Gastrocnemius medialis (tissue), 4 donors: ENCODE measurements at regions of chr3 and their contacts with region 1.

Region 1: DNA sequence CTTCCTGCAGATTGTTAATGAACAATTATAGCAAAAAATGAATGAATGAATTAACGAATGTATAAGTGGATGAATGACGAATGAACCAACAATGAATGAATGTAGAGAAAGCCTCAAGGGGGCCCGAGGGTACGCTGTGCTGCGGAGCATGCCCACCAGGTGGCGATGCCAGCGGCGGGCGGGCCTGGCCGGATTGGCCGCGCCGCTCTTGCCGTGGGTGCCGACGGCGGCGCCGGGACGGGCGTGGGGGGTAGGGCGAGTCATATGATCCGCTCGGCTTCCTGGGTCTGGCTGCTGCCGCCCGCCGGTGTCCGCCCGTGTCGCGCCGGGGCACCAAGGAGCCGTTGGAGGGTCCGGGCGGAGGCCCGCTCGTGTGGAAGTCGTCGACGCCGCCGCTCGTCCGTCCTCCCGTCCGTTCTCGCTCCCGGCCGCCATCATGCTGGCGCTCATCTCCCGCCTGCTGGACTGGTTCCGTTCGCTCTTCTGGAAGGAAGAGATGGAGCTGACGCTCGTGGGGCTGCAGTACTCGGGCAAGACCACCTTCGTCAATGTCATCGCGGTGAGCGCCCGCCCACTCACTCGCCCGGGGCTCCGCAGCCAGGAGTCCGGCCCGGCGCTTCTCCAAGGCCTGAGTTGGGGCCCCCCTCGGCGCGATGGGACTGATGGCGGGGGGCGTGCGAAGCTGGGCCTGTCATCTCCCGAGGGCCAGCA is at the start of gene ARL8B:
- DNase-seq: peak; percentile 82 to 89
- ATAC-seq: peak; percentile 70 to 75
- H3K4me3 ChIP-seq: peak within 1 kb of the TSS; percentile 90 to 100 (median 98)
- H3K27ac ChIP-seq: peak within 1 kb of the TSS; percentile 96 to 100 (median 98)
- H3K4me1 ChIP-seq: peaks cover 34 to 40% of the 10 kb centered on the region in 2 donors
- H3K27me3 ChIP-seq: no peaks in the 10 kb centered on the region
- CTCF ChIP-seq: peak; percentile 89 to 98 (median 98)
- POLR2A ChIP-seq: peak; percentile 91 to 96
- total RNA-seq, gene ARL8B: 69.3 to 198 (median 95.0) TPM

Region 2: DNA sequence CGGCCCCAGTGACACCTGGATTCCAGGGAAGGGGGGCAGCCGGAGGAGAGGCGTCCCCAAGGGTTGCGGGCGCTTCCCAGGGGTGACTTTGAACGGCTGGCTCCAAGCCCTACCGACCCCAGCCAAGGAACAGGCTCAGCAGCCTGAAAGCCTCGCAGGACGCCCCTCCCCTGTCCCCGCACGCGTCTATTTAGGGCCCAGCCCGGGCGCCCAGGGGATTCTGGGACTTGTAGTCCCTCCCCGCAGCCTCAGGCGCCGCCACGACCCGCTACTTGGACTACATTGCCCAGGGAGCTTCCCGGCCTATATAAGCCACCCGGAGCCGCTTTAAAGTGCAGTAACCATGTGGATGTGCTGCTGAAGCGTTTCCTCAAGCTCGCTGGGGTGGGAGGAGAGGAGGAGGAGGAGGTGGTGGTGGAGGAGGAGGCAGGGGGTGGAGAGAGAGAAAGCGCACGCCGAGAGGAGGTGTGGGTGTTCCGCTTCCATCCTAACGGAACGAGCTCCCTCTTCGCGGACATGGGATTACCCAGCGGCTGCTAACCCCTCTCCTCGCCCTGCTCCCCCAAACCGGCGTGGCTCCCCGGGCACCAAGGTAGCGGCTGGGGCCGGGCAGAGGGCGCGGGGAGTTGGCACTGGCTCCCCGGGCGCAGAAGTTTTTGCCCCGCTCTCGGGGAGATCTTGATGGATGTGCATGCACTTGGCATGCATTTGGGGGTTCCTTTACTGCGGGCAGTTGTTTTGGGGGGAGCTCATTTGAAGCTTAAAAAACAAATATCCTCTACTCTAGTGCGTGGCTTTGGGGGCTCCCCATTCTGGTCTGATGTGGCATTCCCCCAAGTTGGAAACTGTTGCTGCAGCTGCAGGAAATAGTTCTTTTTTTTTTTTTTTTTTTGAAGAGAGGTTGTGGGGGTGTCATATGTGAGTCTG is 628.9 kb before region 1 on chr3 and contains the start of gene ITPR1:
- in situ Hi-C with region 1: no loop called
- intact Hi-C with region 1: loop called (anchors 10 kb)
- DNase-seq: peak; percentile 96 to 97
- ATAC-seq: peak; percentile 93 to 94
- H3K4me3 ChIP-seq: peak within 1 kb of the TSS; percentile 78 to 97 (median 87)
- H3K27ac ChIP-seq: peak within 1 kb of the TSS; percentile 90 to 97 (median 92)
- H3K4me1 ChIP-seq: peaks cover 16 to 25% of the 10 kb centered on the region in 2 donors
- H3K27me3 ChIP-seq: no peaks in the 10 kb centered on the region
- CTCF ChIP-seq: no peak
- POLR2A ChIP-seq: peak; percentile 95 to 99
- total RNA-seq, gene ITPR1: 5.5 to 21.7 (median 11.3) TPM

Region 3: DNA sequence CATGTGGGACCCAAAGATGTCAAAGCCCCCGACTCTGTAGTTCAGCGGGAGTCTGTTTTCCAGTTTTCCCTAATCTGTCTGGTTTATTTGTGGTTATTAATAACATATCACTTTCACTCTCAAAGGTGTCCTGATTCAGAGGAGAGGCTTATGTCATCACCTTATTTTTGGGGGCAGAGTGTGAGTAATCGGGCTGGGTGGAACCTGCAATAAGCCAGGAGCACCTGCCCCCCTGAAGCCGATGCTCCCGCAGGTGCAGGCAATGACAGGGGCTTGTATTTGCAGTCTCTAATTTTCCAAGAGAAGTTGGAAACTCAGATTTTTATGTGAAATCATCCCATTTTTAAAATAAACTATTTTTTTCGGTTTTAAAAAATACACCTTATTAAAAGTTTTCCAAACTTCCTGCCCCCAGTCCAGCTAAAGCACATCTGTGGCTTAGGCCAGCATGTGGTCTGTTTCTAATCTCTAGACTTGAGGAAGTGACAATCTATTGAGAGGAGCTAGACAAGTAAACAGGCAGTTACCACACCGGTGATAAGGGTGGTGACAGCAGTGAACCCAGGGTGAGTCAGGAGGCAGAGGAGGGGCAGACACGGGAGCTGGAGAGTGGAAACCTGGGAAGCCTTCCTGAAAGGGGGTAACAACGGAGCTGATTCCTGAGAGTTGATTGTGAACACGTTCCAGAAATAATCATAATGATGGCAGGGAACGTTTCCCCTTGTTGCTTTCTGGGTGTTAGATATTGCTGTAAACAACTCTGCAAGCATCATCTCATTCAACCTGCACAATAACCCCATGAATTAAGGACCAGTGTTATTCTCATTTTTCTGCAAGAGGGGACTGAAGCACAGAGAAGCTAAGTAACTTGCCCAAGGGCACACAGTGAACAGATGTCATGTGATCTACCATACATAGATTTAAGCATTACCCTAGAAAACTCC is 105.7 kb before region 1 on chr3:
- in situ Hi-C with region 1: no loop called
- intact Hi-C with region 1: no loop called
- DNase-seq: peak in 1 of 2 donors; percentile 50
- ATAC-seq: peak; percentile 63 to 74
- H3K4me3 ChIP-seq: no peak overlapping the region
- H3K27ac ChIP-seq: peak overlapping the region; percentile 21 to 67 (median 62)
- H3K4me1 ChIP-seq: peaks cover 16 to 19% of the 10 kb centered on the region in 2 donors
- H3K27me3 ChIP-seq: no peaks in the 10 kb centered on the region
- CTCF ChIP-seq: no peak
- POLR2A ChIP-seq: no peak

Region 4: DNA sequence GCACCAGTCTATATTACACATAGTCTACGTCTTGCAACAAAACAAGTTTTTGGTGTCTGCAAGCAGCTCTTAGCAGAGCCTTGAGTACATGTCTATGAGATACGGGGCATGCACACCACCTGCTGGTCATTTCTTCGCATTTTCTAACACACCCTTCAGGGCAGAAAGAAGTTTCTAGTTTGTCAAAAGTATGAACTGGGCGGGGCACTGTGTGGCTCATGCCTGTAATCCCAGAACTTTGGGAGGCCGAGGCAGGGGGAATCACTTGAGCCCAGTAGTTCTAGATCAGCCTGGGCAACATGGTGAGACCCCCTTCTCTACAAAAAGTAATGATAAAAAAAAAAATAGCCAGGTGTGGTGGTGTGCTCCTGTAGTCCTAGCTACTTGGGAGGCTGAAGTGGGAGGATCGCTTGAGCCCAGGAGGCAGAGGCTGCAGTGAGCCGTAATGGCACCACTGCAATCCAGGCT is 64.3 kb before region 1 on chr3:
- in situ Hi-C with region 1: no loop called
- intact Hi-C with region 1: loop called (anchors 5 kb)
- DNase-seq: peak; percentile 57 to 79
- ATAC-seq: peak; percentile 73 to 82
- H3K4me3 ChIP-seq: no peak overlapping the region
- H3K27ac ChIP-seq: no peak overlapping the region
- H3K4me1 ChIP-seq: peaks cover 27 to 35% of the 10 kb centered on the region in 2 donors
- H3K27me3 ChIP-seq: no peaks in the 10 kb centered on the region
- CTCF ChIP-seq: peak; percentile 75 to 85 (median 79)
- POLR2A ChIP-seq: no peak

Region 5: DNA sequence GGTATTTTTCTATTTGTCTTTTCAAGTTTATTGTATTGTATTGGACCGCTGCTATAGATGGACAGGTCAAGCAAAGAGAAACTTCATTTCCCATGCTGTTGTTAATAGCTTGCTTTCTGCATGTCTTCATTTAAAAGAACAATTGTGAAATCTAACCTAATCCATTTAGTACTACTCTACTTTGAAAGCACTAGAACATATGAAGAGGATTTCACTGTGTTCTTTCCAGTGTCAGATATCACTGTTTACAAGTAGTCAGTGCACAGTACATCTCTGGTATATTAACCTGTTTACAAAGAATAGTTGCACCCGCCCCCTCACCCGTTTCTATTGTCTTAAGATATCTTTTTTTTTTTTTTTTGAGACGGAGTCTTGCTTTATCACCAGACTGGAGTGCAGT is 43.5 kb after region 1 on chr3:
- in situ Hi-C with region 1: no loop called
- intact Hi-C with region 1: loop called (anchors 2 kb)
- DNase-seq: peak in 1 of 2 donors; percentile 33
- ATAC-seq: peak; percentile 97 to 98
- H3K4me3 ChIP-seq: peak overlapping the region in 1 of 4 donors; percentile 21
- H3K27ac ChIP-seq: peak overlapping the region; percentile 51 to 86 (median 67)
- H3K4me1 ChIP-seq: peaks cover 65 to 80% of the 10 kb centered on the region in 2 donors
- H3K27me3 ChIP-seq: no peaks in the 10 kb centered on the region
- CTCF ChIP-seq: no peak
- POLR2A ChIP-seq: no peak

Region 6: GRCh38 chr3:5194341-5195159 is 72.4 kb after region 1 on chr3:
- in situ Hi-C with region 1: loop called in 2 of 4 experiments (anchors 5 to 10 kb)
- intact Hi-C with region 1: loop called (anchors 1 kb)
- DNase-seq: peak; percentile 69 to 70
- ATAC-seq: peak; percentile 97 to 98
- H3K4me3 ChIP-seq: no peak overlapping the region
- H3K27ac ChIP-seq: peak overlapping the region; percentile 79 to 88 (median 82)
- H3K4me1 ChIP-seq: peaks cover 49 to 51% of the 10 kb centered on the region in 2 donors
- H3K27me3 ChIP-seq: no peaks in the 10 kb centered on the region
- CTCF ChIP-seq: no peak
- POLR2A ChIP-seq: peak in 1 of 2 donors; percentile 39